Panc1 (cell line): ENCODE measurements at regions of chr1 and their contacts with region 1.

Region 1: GRCh38 chr1:86965012-86965826 is 50.8 kb downstream of the HS2ST1 start:
- DNase-seq: peak; percentile 24
- ATAC-seq: peak; percentile 78
- H3K4me3 ChIP-seq: no peak overlapping the region
- H3K27ac ChIP-seq: no peak overlapping the region
- H3K4me1 ChIP-seq: no peaks in the 10 kb centered on the region
- H3K27me3 ChIP-seq: no peaks in the 10 kb centered on the region
- CTCF ChIP-seq: peak; percentile 87

Region 2: GRCh38 chr1:86779308-86780191 is 185.7 kb before region 1 on chr1:
- CTCF ChIA-PET with region 1: interaction called, 14 read pairs
- POLR2A ChIA-PET with region 1: no interaction called
- in situ Hi-C with region 1: no loop called
- intact Hi-C with region 1: no loop called
- DNase-seq: no peak
- ATAC-seq: peak; percentile 57
- H3K4me3 ChIP-seq: no peak overlapping the region
- H3K27ac ChIP-seq: no peak overlapping the region
- H3K4me1 ChIP-seq: no peaks in the 10 kb centered on the region
- H3K27me3 ChIP-seq: no peaks in the 10 kb centered on the region
- CTCF ChIP-seq: no peak

Region 3: GRCh38 chr1:87084244-87084836 is 119.1 kb after region 1 on chr1:
- CTCF ChIA-PET with region 1: no interaction called
- POLR2A ChIA-PET with region 1: no interaction called
- in situ Hi-C with region 1: no loop called
- intact Hi-C with region 1: loop called (anchors 10 kb)
- DNase-seq: no peak
- ATAC-seq: peak; percentile 65
- H3K4me3 ChIP-seq: no peak overlapping the region
- H3K27ac ChIP-seq: no peak overlapping the region
- H3K4me1 ChIP-seq: no peaks in the 10 kb centered on the region
- H3K27me3 ChIP-seq: no peaks in the 10 kb centered on the region
- CTCF ChIP-seq: peak; percentile 69; the same call in 1 of the 2 replicates